ENCODE measurements at regions of chr9 and their contacts with region 1.

Region 1: DNA sequence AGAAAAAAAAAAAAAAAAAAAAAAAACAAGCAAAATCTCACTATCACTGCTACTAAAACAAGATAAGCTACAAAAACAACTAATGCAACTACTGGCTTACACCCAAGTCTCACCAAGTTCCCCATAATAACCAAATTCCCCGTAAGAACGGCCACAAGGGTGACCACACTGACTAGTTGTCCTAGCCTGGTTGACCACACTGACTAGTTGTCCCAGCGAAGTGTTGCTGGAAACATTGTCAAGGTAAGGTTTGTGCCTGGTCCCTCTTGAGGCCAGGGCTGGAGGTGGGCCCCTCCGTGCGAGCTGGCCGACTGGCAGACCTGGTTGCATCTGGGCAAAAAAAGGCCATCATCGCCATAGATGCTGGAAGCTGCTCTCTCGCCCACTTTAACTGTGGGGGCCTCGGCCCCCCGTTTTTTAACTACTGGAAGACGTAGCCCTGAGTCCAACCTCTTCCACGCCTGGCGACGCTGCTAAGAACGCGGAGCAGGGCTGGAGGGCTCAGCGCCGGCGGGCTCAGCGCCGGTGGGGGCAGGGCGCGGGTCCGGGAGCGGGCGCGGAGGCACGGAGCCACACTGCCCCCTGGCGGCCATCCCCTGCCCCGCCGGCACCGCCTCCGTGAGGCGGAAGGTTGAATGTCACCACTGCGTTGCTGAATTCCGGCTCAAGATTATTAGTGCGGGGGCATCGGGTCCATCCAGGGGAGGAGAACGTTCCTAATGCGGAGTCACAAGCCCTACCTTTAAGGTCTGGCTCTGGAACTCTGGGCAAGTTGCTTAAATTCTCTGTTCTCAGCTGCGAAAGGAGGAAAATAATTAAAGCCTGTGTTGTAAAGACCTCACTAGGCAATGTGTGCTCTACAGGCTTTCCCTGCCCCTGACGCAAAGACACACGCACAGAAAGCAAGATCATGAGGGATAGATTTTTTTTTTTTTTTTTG is 84.0 kb downstream of the HSD17B3 start:
- DNase-seq: no peak
- ATAC-seq: peak; percentile 92
- H3K4me3 ChIP-seq: peak overlapping the region in 1 of 2 experiments; percentile 30; a peak in 2 of 4 replicates
- H3K27ac ChIP-seq: no peak overlapping the region; the same call in 1 of the 2 replicates
- H3K4me1 ChIP-seq: peaks cover 5 to 8% of the 10 kb centered on the region in 2 experiments; a peak in 3 of 4 replicates
- H3K27me3 ChIP-seq: 0 out of 2 replicates have a peak, but pooled peaks cover 3% of the 10 kb centered on the region
- CTCF ChIP-seq: peak; percentile 90 to 97 (median 95)
- POLR2A ChIP-seq: no peak
- RAD21 ChIP-seq: peak; percentile 92

Region 2: GRCh38 chr9:94554439-94555391 is 1663.3 kb before region 1 on chr9 and contains the start of gene PCAT7:
- CTCF ChIA-PET with region 1: no interaction called
- POLR2A ChIA-PET with region 1: no interaction called
- RAD21 ChIA-PET with region 1: no interaction called
- intact Hi-C with region 1: loop called (anchors 10 kb)
- DNase-seq: peak; percentile 74
- ATAC-seq: peak; percentile 95
- H3K4me3 ChIP-seq: peak within 1 kb of the TSS; percentile 69 to 80
- H3K27ac ChIP-seq: peak within 1 kb of the TSS; percentile 79
- H3K4me1 ChIP-seq: peaks cover 6 to 21% of the 10 kb centered on the region in 2 experiments; a peak in 2 of 4 replicates
- H3K27me3 ChIP-seq: no peaks in the 10 kb centered on the region
- CTCF ChIP-seq: peak; percentile 65 to 84 (median 77)
- POLR2A ChIP-seq: peak; percentile 92
- RAD21 ChIP-seq: peak; percentile 77
- total RNA-seq, gene PCAT7: 3.8 TPM

Region 3: GRCh38 chr9:94681508-94681907 is 1536.5 kb before region 1 on chr9:
- CTCF ChIA-PET with region 1: interaction called, 5 read pairs
- POLR2A ChIA-PET with region 1: no interaction called
- RAD21 ChIA-PET with region 1: no interaction called
- intact Hi-C with region 1: loop called (anchors 2 kb)
- DNase-seq: peak; percentile 54
- ATAC-seq: peak; percentile 99
- H3K4me3 ChIP-seq: no peak overlapping the region
- H3K27ac ChIP-seq: no peak overlapping the region
- H3K4me1 ChIP-seq: no peaks in the 10 kb centered on the region
- H3K27me3 ChIP-seq: peaks cover 16% of the 10 kb centered on the region; the same call in 1 of the 2 replicates
- CTCF ChIP-seq: peak; percentile 57 to 77 (median 76)
- POLR2A ChIP-seq: no peak
- RAD21 ChIP-seq: peak; percentile 90

Region 4: GRCh38 chr9:95510709-95511615 is 707.1 kb before region 1 on chr9:
- CTCF ChIA-PET with region 1: no interaction called
- POLR2A ChIA-PET with region 1: no interaction called
- RAD21 ChIA-PET with region 1: no interaction called
- intact Hi-C with region 1: loop called (anchors 5 kb)
- DNase-seq: peak; percentile 86
- ATAC-seq: peak; percentile 79
- H3K4me3 ChIP-seq: peak overlapping the region; percentile 76 to 90
- H3K27ac ChIP-seq: peak overlapping the region; percentile 74
- H3K4me1 ChIP-seq: peaks cover 13 to 28% of the 10 kb centered on the region in 2 experiments
- H3K27me3 ChIP-seq: no peaks in the 10 kb centered on the region
- CTCF ChIP-seq: no peak
- POLR2A ChIP-seq: no peak
- RAD21 ChIP-seq: no peak

Region 5: GRCh38 chr9:96317335-96317980 is 99.4 kb after region 1 on chr9:
- CTCF ChIA-PET with region 1: interaction called, 3 read pairs
- POLR2A ChIA-PET with region 1: no interaction called
- RAD21 ChIA-PET with region 1: no interaction called
- intact Hi-C with region 1: loop called (anchors 1 kb)
- DNase-seq: peak; percentile 41
- ATAC-seq: peak; percentile 86
- H3K4me3 ChIP-seq: no peak overlapping the region
- H3K27ac ChIP-seq: no peak overlapping the region
- H3K4me1 ChIP-seq: no peaks in the 10 kb centered on the region
- H3K27me3 ChIP-seq: no peaks in the 10 kb centered on the region
- CTCF ChIP-seq: peak; percentile 90 to 95 (median 92)
- POLR2A ChIP-seq: no peak
- RAD21 ChIP-seq: peak; percentile 96

Region 6: GRCh38 chr9:96599298-96599697 is 381.3 kb after region 1 on chr9:
- CTCF ChIA-PET with region 1: no interaction called
- POLR2A ChIA-PET with region 1: no interaction called
- RAD21 ChIA-PET with region 1: no interaction called
- intact Hi-C with region 1: no loop called
- DNase-seq: no peak
- ATAC-seq: no peak
- H3K4me3 ChIP-seq: no peak overlapping the region
- H3K27ac ChIP-seq: no peak overlapping the region
- H3K4me1 ChIP-seq: no peaks in the 10 kb centered on the region
- H3K27me3 ChIP-seq: no peaks in the 10 kb centered on the region
- CTCF ChIP-seq: no peak
- POLR2A ChIP-seq: no peak
- RAD21 ChIP-seq: no peak

Measured in HCT116 (cell line).